HEK293 (cell line): ENCODE measurements at regions of chr7 and their contacts with region 1.

Region 1: GRCh38 chr7:111763221-111763801 is 201.0 kb upstream of the IMMP2L start:
- H3K4me3 ChIP-seq: no peak overlapping the region
- H3K27ac ChIP-seq: no peak overlapping the region
- H3K4me1 ChIP-seq: no peaks in the 10 kb centered on the region
- CTCF ChIP-seq: no peak

Region 2: GRCh38 chr7:111752022-111752582 is 11.2 kb before region 1 on chr7:
- CTCF ChIA-PET with region 1: interaction called, 29 read pairs
- POLR2A ChIA-PET with region 1: no interaction called
- H3K4me3 ChIP-seq: no peak overlapping the region
- H3K27ac ChIP-seq: no peak overlapping the region
- H3K4me1 ChIP-seq: no peaks in the 10 kb centered on the region
- CTCF ChIP-seq: 0 out of 2 replicates have a peak, but pooled peaks have one; percentile 33

Region 3: GRCh38 chr7:111855161-111855856 is 92.0 kb after region 1 on chr7:
- CTCF ChIA-PET with region 1: interaction called, 87 read pairs
- POLR2A ChIA-PET with region 1: no interaction called
- H3K4me3 ChIP-seq: no peak overlapping the region
- H3K27ac ChIP-seq: no peak overlapping the region
- H3K4me1 ChIP-seq: no peaks in the 10 kb centered on the region
- CTCF ChIP-seq: peak; percentile 26; the same call in 1 of the 2 replicates

Region 4: GRCh38 chr7:112414855-112415490 is 651.7 kb after region 1 on chr7:
- CTCF ChIA-PET with region 1: interaction called, 17 read pairs
- POLR2A ChIA-PET with region 1: no interaction called
- H3K4me3 ChIP-seq: no peak overlapping the region
- H3K27ac ChIP-seq: no peak overlapping the region
- H3K4me1 ChIP-seq: no peaks in the 10 kb centered on the region
- CTCF ChIP-seq: peak; percentile 61; the same call in 1 of the 2 replicates

Region 5: GRCh38 chr7:112495810-112496462 is 732.6 kb after region 1 on chr7:
- CTCF ChIA-PET with region 1: interaction called, 14 read pairs
- POLR2A ChIA-PET with region 1: no interaction called
- H3K4me3 ChIP-seq: no peak overlapping the region
- H3K27ac ChIP-seq: no peak overlapping the region
- H3K4me1 ChIP-seq: no peaks in the 10 kb centered on the region
- CTCF ChIP-seq: peak; percentile 89